ENCODE measurements at regions of chr3 and their contacts with region 1.

Region 1: DNA sequence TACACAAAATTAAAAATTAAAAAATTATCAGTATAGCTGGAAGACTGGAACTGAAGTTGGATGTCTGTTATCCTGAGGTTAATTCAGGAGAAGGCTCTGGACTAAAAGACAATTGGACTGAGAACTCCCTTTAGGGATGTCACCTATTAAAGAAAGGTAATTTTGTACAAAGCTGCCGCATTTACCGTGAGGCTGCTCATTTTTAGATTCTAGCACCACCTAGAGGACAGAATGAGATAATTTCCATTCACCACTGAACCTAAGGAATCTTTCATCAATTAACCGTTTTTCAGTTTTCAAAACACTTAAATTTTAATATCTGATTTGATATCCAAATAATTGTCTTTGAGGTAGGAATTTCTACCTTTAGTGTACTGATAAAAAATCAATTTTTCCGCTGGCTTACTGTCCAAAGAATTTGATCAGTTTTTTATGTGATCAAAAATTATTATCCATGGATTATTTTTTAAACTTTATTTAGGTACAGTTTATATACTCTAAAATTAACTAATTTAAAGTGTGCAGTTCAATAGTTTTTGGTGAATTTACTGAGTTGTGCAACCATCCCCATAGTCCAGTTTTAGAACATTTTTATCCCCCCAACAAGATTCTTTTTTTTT is 106.7 kb upstream of the TNIK start:
- DNase-seq: no peak

Region 2: GRCh38 chr3:170961616-170962400 is 605.1 kb before region 1 on chr3:
- intact Hi-C with region 1: loop called (anchors 2 kb)
- DNase-seq: no peak

Region 3: GRCh38 chr3:171049861-171050444 is 517.0 kb before region 1 on chr3:
- intact Hi-C with region 1: loop called (anchors 5 kb)
- DNase-seq: no peak

Region 4: GRCh38 chr3:171157286-171157685 is 409.6 kb before region 1 on chr3:
- intact Hi-C with region 1: loop called (anchors 10 kb)
- DNase-seq: no peak

Region 5: GRCh38 chr3:171187706-171188290 is 379.1 kb before region 1 on chr3:
- intact Hi-C with region 1: loop called (anchors 5 kb)
- DNase-seq: no peak

Region 6: DNA sequence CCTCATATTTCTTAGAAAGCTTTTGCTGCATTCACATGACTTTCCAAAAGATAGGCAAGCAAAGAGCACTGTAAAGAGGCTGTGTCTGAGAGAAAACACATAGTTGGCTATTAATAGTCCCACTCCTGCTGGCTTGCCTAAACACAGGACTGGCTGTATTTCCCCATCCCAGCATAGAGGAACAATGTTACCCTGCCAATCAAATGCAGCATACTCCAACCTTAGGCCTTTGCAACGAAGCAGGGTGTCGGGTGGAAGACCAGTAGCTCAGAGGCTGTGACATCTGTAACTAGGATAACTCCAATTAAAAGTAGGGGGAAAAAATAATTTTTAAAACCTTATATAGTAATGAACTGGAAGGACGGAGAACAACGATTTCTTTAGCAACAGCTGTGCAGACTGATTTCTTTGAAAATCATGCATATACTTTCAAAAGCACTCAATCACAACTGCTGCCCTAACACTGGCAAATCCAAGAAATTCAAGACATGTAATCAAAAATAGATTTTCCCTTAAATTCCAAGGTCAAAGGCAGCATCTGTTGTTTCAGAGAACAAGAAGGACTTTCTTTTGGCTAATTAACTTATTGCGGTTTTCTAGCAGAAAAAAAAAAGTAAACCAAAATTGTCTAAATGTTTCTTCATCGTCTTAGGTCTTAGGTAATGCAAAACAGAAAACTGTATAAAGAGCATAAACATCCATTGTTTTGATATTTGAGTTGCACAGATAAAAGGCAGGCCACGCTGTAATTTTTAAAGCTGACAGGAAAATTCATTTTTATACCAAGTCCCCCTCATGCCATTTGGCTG is 246.0 kb before region 1 on chr3:
- intact Hi-C with region 1: loop called (anchors 5 kb)
- DNase-seq: no peak

Region 7: GRCh38 chr3:171436380-171436779 is 130.5 kb before region 1 on chr3:
- intact Hi-C with region 1: no loop called
- DNase-seq: no peak